ENCODE measurements at regions of chr7 and their contacts with region 1.

Region 1: GRCh38 chr7:55132890-55133551 is 114.2 kb downstream of the EGFR start:
- DNase-seq: peak; percentile 97
- H3K4me3 Mint-ChIP-seq: peak overlapping the region; percentile 44
- H3K27ac Mint-ChIP-seq: peak overlapping the region; percentile 90
- H3K4me1 Mint-ChIP-seq: peaks cover 54% of the 10 kb centered on the region
- H3K27me3 Mint-ChIP-seq: no peaks in the 10 kb centered on the region
- CTCF ChIP-seq: no peak

Region 2: DNA sequence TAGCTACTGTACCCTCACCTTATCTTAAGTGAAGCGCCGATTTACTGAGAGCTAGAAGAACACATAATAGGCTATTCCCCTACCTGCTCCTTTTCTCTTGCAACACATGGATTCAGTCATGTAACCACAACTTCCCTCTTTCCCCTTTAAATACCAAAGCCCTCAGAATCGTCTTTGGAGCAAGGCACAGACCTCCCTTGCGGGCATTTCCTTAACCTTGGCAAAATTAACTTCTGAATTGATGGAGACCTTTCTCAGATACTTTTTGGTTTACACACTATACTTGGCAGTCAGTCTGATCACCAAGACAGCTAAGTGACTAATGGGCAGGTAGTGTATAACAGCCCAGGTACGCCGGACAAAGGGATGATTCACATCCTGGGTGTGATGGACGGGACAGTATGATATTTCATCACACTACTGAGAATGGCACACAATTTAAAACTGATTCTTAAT is 301.3 kb before region 1 on chr7:
- CTCF ChIA-PET with region 1: interaction called, 3 read pairs
- POLR2A ChIA-PET with region 1: interaction called, 4 read pairs
- intact Hi-C with region 1: loop called (anchors 5 kb)
- DNase-seq: peak; percentile 96
- H3K4me3 Mint-ChIP-seq: peak overlapping the region; percentile 28
- H3K27ac Mint-ChIP-seq: peak overlapping the region; percentile 61
- H3K4me1 Mint-ChIP-seq: peaks cover 21% of the 10 kb centered on the region
- H3K27me3 Mint-ChIP-seq: no peaks in the 10 kb centered on the region
- CTCF ChIP-seq: no peak

Region 3: DNA sequence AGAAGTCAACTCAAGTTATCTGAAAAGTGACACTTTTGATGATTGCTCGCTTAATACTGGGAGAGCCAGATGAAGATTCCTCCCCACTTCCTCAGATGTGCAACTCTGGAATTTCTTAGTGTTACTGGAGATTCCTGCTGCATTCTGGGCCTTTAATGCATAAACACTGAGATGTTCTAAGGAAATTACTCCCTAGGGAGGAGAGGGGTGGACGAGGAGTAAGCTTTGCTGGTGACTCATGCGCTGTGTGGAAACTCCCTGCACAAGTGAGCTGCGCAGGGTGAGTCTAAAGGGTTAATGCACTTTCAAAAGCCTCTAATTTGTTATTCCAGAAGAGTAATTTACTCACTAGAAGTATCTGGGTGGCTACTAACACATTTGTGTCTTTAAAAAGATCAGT is 67.9 kb before region 1 on chr7:
- CTCF ChIA-PET with region 1: interaction called, 3 read pairs
- POLR2A ChIA-PET with region 1: interaction called, 15 read pairs
- intact Hi-C with region 1: loop called (anchors 1 kb)
- DNase-seq: peak; percentile 95
- H3K4me3 Mint-ChIP-seq: peak overlapping the region; percentile 63
- H3K27ac Mint-ChIP-seq: peak overlapping the region; percentile 93
- H3K4me1 Mint-ChIP-seq: peaks cover 81% of the 10 kb centered on the region
- H3K27me3 Mint-ChIP-seq: no peaks in the 10 kb centered on the region
- CTCF ChIP-seq: no peak

Region 4: GRCh38 chr7:55086413-55087201 is 46.4 kb before region 1 on chr7:
- CTCF ChIA-PET with region 1: interaction called, 5 read pairs
- POLR2A ChIA-PET with region 1: interaction called, 9 read pairs
- intact Hi-C with region 1: loop called (anchors 5 kb)
- DNase-seq: peak; percentile 78
- H3K4me3 Mint-ChIP-seq: peak overlapping the region; percentile 68
- H3K27ac Mint-ChIP-seq: peak overlapping the region; percentile 54
- H3K4me1 Mint-ChIP-seq: peaks cover 58% of the 10 kb centered on the region
- H3K27me3 Mint-ChIP-seq: no peaks in the 10 kb centered on the region
- CTCF ChIP-seq: no peak

Region 5: DNA sequence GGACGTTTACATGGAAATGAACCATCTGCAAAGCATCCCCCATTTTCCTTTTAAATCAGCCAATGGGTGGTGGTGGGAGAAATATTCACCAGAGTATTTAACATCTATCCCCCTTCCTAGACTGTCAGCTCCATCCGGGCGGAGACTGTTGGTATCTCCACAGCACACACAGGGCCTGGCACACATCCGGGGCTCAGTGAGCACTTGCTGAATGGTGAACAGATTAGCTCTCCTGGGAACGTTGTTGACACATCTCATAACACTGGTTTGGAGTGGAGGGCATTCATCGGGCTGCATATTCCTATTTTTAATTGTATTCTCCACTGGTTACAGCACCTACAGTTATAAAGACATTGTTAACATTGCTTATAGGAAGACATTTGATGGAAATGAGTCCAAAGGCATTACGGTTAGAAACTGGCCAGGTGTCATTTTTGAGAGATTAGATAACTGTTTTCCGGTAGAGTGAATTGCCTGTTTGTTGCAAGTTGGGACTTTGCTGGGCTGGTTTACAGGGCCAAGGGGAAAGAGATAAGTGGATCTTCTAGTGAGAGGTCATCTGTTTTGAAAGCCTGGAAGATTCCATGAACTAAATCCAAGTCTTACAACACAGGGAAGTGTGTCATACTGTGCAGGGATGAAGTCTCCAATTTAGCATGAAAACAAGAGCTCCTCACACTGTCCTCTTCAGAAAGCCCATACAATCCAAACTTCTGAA is 12.4 kb before region 1 on chr7:
- CTCF ChIA-PET with region 1: interaction called, 7 read pairs
- POLR2A ChIA-PET with region 1: interaction called, 23 read pairs
- intact Hi-C with region 1: no loop called
- DNase-seq: peak; percentile 69
- H3K4me3 Mint-ChIP-seq: no peak overlapping the region
- H3K27ac Mint-ChIP-seq: peak overlapping the region; percentile 70
- H3K4me1 Mint-ChIP-seq: peaks cover 42% of the 10 kb centered on the region
- H3K27me3 Mint-ChIP-seq: no peaks in the 10 kb centered on the region
- CTCF ChIP-seq: no peak

Region 6: DNA sequence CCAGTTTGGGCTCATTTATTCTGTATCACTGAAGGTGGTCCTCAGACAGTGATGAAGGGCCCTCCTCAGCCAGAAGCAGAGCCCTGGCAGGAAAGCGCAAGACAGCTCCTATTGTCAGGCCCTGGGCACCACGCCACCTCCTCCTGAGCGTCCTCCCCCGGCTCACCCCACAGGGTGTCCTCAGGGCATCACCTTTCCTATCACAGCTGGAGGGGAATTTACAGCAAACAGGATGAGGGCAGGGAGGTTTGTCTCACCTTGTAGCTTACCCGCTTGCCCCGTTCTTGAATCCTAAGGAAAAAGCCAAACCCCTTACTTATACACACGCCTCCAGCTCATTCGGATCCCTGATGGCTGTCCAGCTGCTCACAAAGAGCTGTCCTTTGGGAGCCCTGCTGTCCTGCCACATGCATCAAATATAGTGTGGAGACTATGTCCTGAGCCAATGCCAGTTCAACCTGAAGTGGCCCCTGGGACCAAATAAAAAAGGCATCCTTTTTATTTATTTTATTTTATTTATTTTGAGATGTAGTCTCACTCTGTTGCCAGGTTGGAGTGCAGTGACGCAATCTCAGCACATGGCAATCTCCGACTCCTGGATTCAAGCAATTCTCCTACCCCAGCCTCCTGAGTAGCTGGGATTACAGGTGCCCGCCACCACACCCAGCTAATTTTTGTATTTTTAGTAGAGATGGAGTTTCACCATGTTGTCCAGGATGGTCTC is 182.1 kb after region 1 on chr7:
- CTCF ChIA-PET with region 1: no interaction called
- POLR2A ChIA-PET with region 1: no interaction called
- intact Hi-C with region 1: no loop called
- DNase-seq: no peak
- H3K4me3 Mint-ChIP-seq: no peak overlapping the region
- H3K27ac Mint-ChIP-seq: no peak overlapping the region
- H3K4me1 Mint-ChIP-seq: no peaks in the 10 kb centered on the region
- H3K27me3 Mint-ChIP-seq: peaks cover 33% of the 10 kb centered on the region
- CTCF ChIP-seq: no peak